ENCODE measurements at regions of chr4 and their contacts with region 1.

Region 1: DNA sequence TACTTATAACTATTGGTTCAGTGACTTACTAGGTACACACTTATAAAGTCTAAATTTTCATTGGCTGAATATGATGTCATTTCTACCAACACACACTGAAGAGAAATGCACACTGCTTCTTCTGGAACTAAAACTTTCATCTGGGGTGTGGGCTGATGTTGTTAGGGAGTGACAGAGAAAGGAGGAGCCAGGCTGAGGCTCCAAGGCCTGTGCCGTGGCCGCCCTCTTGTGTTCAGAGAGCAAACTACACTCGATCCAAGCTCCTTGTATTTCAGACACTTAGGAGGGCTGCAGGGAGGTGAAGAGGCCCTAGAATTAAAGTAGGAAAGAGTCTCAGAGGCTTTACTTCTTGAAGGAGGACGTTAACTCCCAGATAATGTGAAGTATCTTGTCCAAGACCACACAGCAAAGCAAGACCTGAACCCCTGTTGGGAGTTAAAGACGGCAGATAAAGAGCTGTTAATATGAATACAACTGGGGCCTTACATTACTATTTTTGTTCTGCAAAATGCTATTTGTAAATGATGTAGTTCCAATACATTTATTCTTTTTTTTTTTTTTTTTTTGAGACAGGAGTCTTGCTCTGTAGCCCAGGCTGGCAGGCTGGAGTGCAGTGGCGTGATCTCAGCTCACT is 137.5 kb downstream of the AFAP1 start:
- DNase-seq: peak; percentile 69
- H3K4me3 ChIP-seq: no peak overlapping the region
- H3K27ac ChIP-seq: no peak overlapping the region
- H3K4me1 ChIP-seq: no peaks in the 10 kb centered on the region
- CTCF ChIP-seq: peak; percentile 92

Region 2: GRCh38 chr4:7761720-7762119 is 40.5 kb before region 1 on chr4:
- CTCF ChIA-PET with region 1: no interaction called
- POLR2A ChIA-PET with region 1: no interaction called
- intact Hi-C with region 1: loop called (anchors 1 kb)
- DNase-seq: peak; percentile 49
- H3K4me3 ChIP-seq: no peak overlapping the region
- H3K27ac ChIP-seq: no peak overlapping the region
- H3K4me1 ChIP-seq: peaks cover 8% of the 10 kb centered on the region
- CTCF ChIP-seq: peak; percentile 78

Region 3: DNA sequence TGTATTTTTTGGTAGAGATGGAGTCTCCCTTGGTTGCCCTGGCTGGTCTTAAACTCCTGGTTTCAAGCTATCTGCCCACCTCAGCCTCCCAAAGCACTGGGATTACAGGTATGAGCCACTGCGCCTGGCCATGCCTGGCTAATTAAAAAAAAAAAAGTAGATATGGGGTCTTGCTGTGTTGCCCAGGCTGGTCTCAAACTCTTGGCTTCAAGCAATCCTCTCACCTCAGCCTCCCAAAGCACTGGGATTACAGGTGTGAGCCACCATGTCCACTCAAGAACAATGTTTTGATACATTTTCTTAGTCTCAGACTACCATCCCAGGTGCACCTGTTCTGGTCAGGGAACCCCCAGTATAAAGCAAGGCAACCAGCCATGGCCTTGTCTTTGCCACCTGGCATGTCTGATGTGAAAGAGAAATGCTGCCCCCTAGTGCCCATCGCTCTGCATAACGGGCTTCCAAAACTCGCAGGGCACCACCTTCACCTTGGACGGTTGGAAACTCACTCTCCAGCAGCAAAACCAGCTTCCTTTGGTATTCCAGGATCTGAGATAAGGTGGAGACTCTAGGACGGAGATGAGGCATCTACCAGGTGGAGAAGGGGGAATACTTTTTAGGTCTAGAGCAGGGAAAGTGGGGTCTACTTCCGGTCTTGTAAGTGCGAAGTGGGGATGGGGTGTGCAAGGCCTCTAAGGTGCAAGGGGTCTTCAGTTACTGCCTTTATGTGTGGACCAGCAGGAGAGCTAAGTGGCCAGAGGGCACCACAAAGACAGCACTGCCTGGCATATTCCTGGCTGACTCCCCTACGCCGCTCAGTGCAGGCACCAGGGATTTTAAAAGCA is 185.2 kb after region 1 on chr4:
- CTCF ChIA-PET with region 1: no interaction called
- POLR2A ChIA-PET with region 1: no interaction called
- intact Hi-C with region 1: loop called (anchors 1 kb)
- DNase-seq: peak; percentile 80
- H3K4me3 ChIP-seq: no peak overlapping the region
- H3K27ac ChIP-seq: no peak overlapping the region
- H3K4me1 ChIP-seq: no peaks in the 10 kb centered on the region
- CTCF ChIP-seq: peak; percentile 90

Region 4: GRCh38 chr4:8192748-8193738 is 390.8 kb after region 1 on chr4:
- CTCF ChIA-PET with region 1: no interaction called
- POLR2A ChIA-PET with region 1: no interaction called
- intact Hi-C with region 1: loop called (anchors 5 kb)
- DNase-seq: peak; percentile 70
- H3K4me3 ChIP-seq: no peak overlapping the region
- H3K27ac ChIP-seq: no peak overlapping the region
- H3K4me1 ChIP-seq: peaks cover 5% of the 10 kb centered on the region
- CTCF ChIP-seq: peak; percentile 65